GM10248 (cell line): ENCODE measurements at regions of chr5 and their contacts with region 1.

Region 1: GRCh38 chr5:179623003-179623880 is at the start of gene HNRNPH1:
- DNase-seq: peak; percentile 99
- CTCF ChIP-seq: no peak

Region 2: DNA sequence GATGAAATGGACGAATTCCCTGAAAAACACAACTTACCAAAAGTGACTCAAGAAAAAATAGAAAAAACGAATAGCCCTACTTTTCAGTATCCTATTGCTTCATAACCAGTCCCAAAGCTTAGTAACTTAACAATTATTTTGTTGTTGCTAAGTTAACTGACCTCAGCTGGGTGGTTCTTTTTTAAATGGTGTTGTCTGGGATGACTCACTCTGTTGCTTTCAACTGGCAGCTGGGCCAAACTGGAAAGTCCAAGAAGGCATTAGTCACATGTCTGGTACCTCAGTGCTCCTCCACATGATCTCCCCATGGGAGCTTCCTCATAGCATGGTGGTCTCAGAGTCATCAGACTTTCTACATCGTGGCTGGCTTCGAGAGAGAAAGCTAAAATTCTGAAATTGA is 230.2 kb before region 1 on chr5:
- CTCF ChIA-PET with region 1: no interaction called
- POLR2A ChIA-PET with region 1: no interaction called
- DNase-seq: no peak
- CTCF ChIP-seq: no peak

Region 3: DNA sequence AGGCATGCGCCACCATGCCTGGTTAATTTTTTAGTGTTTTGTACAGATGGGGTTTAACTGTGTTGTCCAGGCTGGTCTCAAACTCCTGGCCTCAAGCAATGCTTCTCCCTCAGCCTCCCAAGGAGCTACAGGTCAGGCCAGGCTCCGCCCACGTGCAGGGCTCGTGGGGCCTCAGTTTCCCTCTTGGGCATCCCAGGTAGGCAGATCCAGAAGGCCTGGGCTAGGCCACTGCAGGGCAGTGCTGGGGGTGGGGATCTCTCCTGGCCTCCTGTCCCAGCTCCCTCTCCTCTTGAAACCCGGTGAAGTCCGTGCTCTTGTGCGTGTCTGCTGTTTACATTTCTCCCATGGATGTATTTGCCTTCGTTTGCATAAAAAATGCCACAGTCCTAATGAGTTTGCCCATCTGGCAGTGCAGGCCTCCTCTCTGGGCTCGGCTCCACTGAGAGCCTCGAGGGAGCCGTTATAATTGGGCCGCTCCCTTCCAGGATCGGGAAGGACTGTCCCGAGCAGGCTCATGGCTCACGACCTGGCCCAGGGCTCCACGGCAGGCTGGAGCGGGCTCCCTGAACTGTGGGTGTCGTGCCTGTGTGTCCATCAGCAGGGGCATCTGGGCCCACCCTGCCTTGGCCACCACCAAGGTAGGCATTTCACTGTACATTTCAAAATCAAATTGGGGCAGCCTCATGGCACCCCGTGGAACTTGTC is 125.5 kb before region 1 on chr5:
- CTCF ChIA-PET with region 1: no interaction called
- POLR2A ChIA-PET with region 1: no interaction called
- DNase-seq: no peak
- CTCF ChIP-seq: no peak

Region 4: GRCh38 chr5:179550511-179551230 is 72.6 kb before region 1 on chr5 and contains the start of gene RUFY1:
- CTCF ChIA-PET with region 1: no interaction called
- POLR2A ChIA-PET with region 1: interaction called, 11 read pairs
- DNase-seq: peak; percentile 84
- CTCF ChIP-seq: no peak

Region 5: DNA sequence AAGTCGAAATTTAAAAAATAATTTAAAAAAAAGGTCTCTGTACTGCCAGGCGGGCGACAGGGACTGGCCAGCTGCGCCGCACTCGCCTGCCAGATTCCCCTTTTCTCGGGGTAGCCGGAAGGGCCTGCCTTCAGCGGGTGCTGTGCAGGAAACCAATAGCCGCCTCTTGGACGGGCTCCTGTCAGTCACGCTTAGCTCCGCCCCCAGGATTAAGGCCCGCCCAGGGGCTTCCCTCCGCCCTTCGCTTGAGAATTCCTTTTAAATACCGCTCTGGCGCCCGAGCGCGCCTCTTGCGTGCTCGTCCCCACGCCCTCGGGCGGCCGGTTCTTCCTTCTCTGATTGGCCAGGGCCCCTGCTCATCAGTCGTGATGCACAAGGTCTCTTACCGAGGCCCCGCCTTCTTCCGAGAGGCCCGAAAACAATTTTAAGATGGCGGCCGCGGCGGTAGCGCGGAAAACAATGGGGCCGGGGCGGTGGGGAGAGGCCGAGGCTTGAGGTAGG is 109.2 kb after region 1 on chr5 and contains the start of gene MAML1:
- CTCF ChIA-PET with region 1: no interaction called
- POLR2A ChIA-PET with region 1: interaction called, 10 read pairs
- DNase-seq: peak; percentile 99
- CTCF ChIP-seq: no peak